Activated B cell treated with CpG ODN at 0.5 μM for 24 hours (primary cell): ENCODE measurements at regions of chr1 and their contacts with region 1.

Region 1: GRCh38 chr1:220113136-220113695 is 19.3 kb downstream of the IARS2 start:
- DNase-seq: no peak
- ATAC-seq: peak; percentile 71
- H3K4me3 Mint-ChIP-seq: peak overlapping the region; percentile 25
- H3K27ac Mint-ChIP-seq: no peak overlapping the region
- H3K4me1 Mint-ChIP-seq: peaks cover 6% of the 10 kb centered on the region
- H3K27me3 Mint-ChIP-seq: no peaks in the 10 kb centered on the region
- CTCF ChIP-seq: no peak

Region 2: GRCh38 chr1:219990782-219991510 is 122.3 kb before region 1 on chr1:
- CTCF ChIA-PET with region 1: interaction called, 5 read pairs
- POLR2A ChIA-PET with region 1: no interaction called
- intact Hi-C with region 1: loop called (anchors 1 kb)
- DNase-seq: no peak
- ATAC-seq: no peak
- H3K4me3 Mint-ChIP-seq: no peak overlapping the region
- H3K27ac Mint-ChIP-seq: peak overlapping the region; percentile 53
- H3K4me1 Mint-ChIP-seq: peaks cover 49% of the 10 kb centered on the region
- H3K27me3 Mint-ChIP-seq: no peaks in the 10 kb centered on the region
- CTCF ChIP-seq: no peak

Region 3: DNA sequence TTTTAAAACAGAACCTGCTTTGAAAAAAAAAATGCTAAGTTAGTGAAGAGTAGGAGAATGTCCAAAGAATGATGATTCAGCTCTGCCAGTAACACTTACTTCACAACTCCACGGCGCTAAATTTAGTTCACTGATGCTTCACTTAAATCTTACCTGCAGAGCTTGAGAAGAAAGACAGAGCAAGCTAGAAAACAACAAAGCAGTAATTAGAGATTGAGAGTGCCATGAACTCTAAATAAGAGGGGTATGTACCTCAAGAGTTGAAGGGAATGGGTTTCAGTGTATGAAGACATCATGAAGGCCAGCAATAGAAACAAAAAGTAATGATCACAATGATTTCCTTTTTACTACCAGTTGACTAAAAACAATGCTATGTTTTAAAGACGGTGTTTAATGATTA is 99.7 kb before region 1 on chr1:
- CTCF ChIA-PET with region 1: no interaction called
- POLR2A ChIA-PET with region 1: no interaction called
- intact Hi-C with region 1: no loop called
- DNase-seq: no peak
- ATAC-seq: no peak
- H3K4me3 Mint-ChIP-seq: no peak overlapping the region
- H3K27ac Mint-ChIP-seq: no peak overlapping the region
- H3K4me1 Mint-ChIP-seq: no peaks in the 10 kb centered on the region
- H3K27me3 Mint-ChIP-seq: no peaks in the 10 kb centered on the region
- CTCF ChIP-seq: no peak